ENCODE measurements at regions of chr3 and their contacts with region 1.

Region 1: GRCh38 chr3:155919728-155920127 is 49.3 kb downstream of the GMPS start:
- DNase-seq: no peak
- ATAC-seq: no peak
- H3K4me3 ChIP-seq: no peak overlapping the region
- H3K27ac ChIP-seq: no peak overlapping the region
- H3K4me1 ChIP-seq: no peaks in the 10 kb centered on the region
- H3K27me3 ChIP-seq: no peaks in the 10 kb centered on the region
- CTCF ChIP-seq: no peak

Region 2: GRCh38 chr3:155880286-155880685 is 39.4 kb before region 1 on chr3:
- CTCF ChIA-PET with region 1: no interaction called
- POLR2A ChIA-PET with region 1: interaction called, 52 read pairs
- intact Hi-C with region 1: no loop called
- DNase-seq: no peak
- ATAC-seq: no peak
- H3K4me3 ChIP-seq: no peak overlapping the region
- H3K27ac ChIP-seq: no peak overlapping the region
- H3K4me1 ChIP-seq: 0 out of 2 replicates have a peak, but pooled peaks cover 3% of the 10 kb centered on the region
- H3K27me3 ChIP-seq: no peaks in the 10 kb centered on the region
- CTCF ChIP-seq: no peak

Measured in PC-3 (cell line).